ENCODE measurements at regions of chr3 and their contacts with region 1.

Region 1: DNA sequence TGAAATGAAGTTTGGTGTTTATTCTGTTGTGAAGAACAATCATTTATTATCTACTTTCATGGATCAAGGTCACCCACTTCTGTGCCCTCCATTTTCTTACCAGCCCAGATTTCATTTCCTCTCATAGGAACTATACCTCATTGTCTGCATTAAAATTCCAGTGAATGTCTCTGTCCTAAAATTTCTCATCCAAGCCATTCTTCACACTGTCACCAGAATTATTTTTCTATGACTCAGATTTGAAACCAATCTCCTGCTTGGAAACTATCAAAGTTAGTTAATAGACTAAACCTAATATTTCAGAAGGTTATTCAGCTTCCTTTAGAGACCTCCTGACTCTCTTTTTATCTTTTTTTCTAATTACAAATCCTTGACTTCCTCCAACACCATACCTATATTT is 364.1 kb upstream of the CBLB start:
- DNase-seq: no peak
- H3K4me3 Mint-ChIP-seq: no peak overlapping the region
- H3K27ac Mint-ChIP-seq: peak overlapping the region; percentile 46
- H3K4me1 Mint-ChIP-seq: peaks cover 46% of the 10 kb centered on the region
- H3K27me3 Mint-ChIP-seq: no peaks in the 10 kb centered on the region

Region 2: GRCh38 chr3:106276755-106277612 is 44.0 kb after region 1 on chr3:
- intact Hi-C with region 1: loop called (anchors 5 kb)
- DNase-seq: no peak
- H3K4me3 Mint-ChIP-seq: no peak overlapping the region
- H3K27ac Mint-ChIP-seq: peak overlapping the region; percentile 9
- H3K4me1 Mint-ChIP-seq: peaks cover 31% of the 10 kb centered on the region
- H3K27me3 Mint-ChIP-seq: no peaks in the 10 kb centered on the region

Measured in activated T-helper 1 cell treated with anti-CD3 and anti-CD28 coated beads, Interleukin-12 subunit alpha, Interleukin-12 subunit beta, Interleukin-2, Interleukin-4 antibody, amounts not matched to agents 30 ng/mL and 10 ng/mL and 1 ng/mL, durations not matched to agents 14 hours and 24 hours and 36 hours (primary cell).